ENCODE measurements at regions of chr10 and their contacts with region 1.

Region 1: DNA sequence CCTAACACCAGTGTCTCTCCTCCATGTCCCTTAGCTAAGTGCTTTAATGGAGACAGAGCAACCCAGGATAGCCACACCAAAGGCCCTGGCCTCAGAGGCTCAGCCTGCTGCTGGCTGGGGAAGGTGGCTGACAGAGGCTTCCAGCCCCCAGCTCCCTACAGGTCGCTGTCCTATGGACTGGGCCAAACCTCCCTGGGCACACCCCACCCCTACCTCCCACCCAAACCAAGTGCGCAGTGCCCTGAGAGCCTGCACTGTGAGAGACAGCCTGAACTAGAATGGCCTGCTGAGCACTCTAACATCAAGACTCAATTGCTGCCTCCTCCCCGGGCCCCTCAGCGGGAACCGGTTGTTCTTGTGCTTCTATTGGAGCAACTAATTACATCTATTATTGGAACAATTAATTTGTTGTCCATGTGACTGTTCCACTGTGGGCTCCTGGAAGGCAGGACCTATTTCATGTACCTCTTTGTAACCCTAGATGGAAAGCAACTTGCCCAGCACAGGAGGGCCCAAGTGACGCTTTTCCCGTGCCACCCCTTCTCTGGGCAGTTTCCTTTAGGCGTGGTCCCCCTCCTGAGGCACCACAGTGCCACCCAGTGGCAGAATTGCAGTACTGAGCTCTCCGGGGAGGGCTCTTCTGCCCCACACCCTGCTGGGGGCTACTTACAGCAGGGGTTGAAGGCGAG is 63.6 kb upstream of the WAPL start:
- DNase-seq: peak; percentile 66 to 68
- ATAC-seq: peak; percentile 81 to 95 (median 92)
- H3K4me3 ChIP-seq: peak overlapping the region in 1 of 10 donors; percentile 5
- H3K27ac ChIP-seq: peak overlapping the region in 1 of 10 donors; percentile 29
- H3K4me1 ChIP-seq: peaks cover 0 to 13% (median 6%) of the 10 kb centered on the region in 9 donors
- H3K27me3 ChIP-seq: no peaks in the 10 kb centered on the region
- CTCF ChIP-seq: peak; percentile 88 to 98 (median 97)

Region 2: DNA sequence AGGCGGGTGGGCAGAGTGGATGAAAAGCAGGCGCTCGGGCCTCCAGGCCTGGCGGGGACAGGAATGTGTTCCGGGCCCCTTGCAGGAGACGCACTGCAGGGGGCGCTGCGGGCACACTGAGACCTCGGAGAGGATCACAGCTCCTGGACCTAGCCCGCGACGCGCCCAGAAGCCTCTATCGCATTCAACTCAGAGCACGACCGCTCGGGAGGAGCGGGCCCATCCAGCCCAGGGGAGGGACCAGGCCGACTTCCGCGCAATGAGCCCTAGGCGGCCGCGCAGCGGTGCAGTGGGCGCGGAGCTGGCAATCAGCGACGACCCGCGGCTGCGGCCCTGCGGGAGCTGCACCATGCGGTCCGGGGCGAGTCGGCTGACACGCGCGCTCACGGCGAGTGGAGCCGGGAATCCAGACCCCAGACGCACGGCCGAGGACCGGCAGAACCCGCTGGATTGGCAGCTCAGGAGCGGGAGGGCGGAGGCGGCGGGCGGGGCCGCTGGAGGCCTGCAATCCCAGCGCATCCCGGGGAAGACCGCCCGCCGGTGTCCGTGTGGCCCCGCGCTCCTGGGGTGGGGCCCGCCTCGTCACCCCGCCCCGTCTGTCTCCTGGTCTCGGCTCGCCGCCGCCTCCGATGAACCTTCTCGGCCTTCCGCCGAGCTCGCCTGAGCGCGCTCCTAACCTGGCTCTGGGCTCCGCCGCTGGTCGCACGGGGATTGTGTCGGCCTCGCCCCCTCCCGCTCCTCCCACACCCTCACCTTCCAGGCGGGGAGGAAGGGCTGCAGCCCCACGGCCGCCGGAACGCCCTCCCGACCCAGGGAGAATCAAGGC is 185.1 kb before region 1 on chr10:
- intact Hi-C with region 1: loop called (anchors 1 to 5 kb)
- DNase-seq: peak; percentile 93 to 95
- ATAC-seq: peak; percentile 93 to 96 (median 95)
- H3K4me3 ChIP-seq: peak overlapping the region; percentile 19 to 69 (median 64)
- H3K27ac ChIP-seq: peak overlapping the region in 8 of 10 donors; percentile 30 to 73 (median 68)
- H3K4me1 ChIP-seq: peaks cover 0 to 40% (median 34%) of the 10 kb centered on the region in 9 donors
- H3K27me3 ChIP-seq: peaks cover 0 to 41% (median 17%) of the 10 kb centered on the region in 7 donors
- CTCF ChIP-seq: peak; percentile 72 to 98 (median 95)

Region 3: DNA sequence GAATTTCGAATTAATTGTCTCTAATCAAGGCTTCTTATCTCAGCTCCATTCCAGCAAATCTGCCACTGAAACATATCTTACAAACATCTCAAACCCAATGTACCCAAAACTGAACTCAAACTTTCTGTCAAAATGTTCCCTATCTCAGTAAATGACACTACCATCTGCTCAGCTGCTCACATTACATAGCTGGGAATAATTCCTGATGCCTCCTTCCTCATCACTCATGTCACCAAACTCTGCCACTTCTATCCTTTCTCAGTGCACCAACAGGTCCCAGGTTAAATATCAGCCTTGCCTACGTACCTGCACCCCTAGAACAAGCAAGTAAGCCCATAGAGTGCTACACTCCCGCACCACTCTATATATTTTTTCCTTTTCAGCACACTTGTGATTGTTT is 76.0 kb before region 1 on chr10:
- intact Hi-C with region 1: no loop called
- DNase-seq: no peak
- ATAC-seq: no peak
- H3K4me3 ChIP-seq: no peak overlapping the region
- H3K27ac ChIP-seq: no peak overlapping the region
- H3K4me1 ChIP-seq: peaks cover 3 to 72% (median 47%) of the 10 kb centered on the region in 9 donors
- H3K27me3 ChIP-seq: no peaks in the 10 kb centered on the region
- CTCF ChIP-seq: no peak

Region 4: GRCh38 chr10:86521678-86522509 is 63.3 kb before region 1 on chr10 and contains the start of gene WAPL:
- intact Hi-C with region 1: loop called in 1 of 10 experiments (anchors 5 kb)
- DNase-seq: peak; percentile 95 to 96
- ATAC-seq: peak; percentile 98 to 99 (median 98)
- H3K4me3 ChIP-seq: peak within 1 kb of the TSS; percentile 59 to 100 (median 96)
- H3K27ac ChIP-seq: peak within 1 kb of the TSS; percentile 86 to 99 (median 96)
- H3K4me1 ChIP-seq: peaks cover 7 to 65% (median 50%) of the 10 kb centered on the region in 9 donors
- H3K27me3 ChIP-seq: no peaks in the 10 kb centered on the region
- CTCF ChIP-seq: peak in 2 of 9 donors; percentile 12 to 28
- total RNA-seq, gene WAPL: 18.5 to 29.5 (median 25.1) TPM

Region 5: DNA sequence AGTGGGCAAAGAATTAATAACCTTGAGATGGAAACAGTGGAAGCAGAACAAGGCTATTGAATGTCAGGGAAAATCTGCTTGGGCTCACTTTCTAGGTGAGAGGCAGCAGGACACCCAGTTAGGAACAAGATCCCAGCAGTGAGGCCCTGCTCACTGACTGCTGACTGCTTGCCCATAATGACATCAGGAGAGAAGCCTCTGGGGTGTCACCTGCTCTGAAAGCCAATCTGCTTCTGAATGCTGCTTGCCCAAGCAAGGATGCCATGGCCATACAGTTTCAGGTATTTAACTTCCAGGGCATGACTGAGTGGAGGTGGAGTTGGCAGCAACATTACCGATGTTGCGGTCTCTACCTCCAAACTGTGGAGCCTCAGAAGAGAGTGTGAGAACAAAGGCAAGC is 51.9 kb before region 1 on chr10:
- intact Hi-C with region 1: loop called in 1 of 10 experiments (anchors 5 kb)
- DNase-seq: peak in 1 of 2 donors; percentile 44
- ATAC-seq: peak in 4 of 8 donors; percentile 16 to 66 (median 52)
- H3K4me3 ChIP-seq: no peak overlapping the region
- H3K27ac ChIP-seq: peak overlapping the region in 4 of 10 donors; percentile 54 to 86 (median 76)
- H3K4me1 ChIP-seq: peaks cover 0 to 22% (median 10%) of the 10 kb centered on the region in 9 donors
- H3K27me3 ChIP-seq: peaks cover 0 to 15% (median 0%) of the 10 kb centered on the region in 7 donors
- CTCF ChIP-seq: no peak

Measured in heart right ventricle (tissue), 16 donors.